ENCODE measurements at regions of chr1 and their contacts with region 1.

Region 1: DNA sequence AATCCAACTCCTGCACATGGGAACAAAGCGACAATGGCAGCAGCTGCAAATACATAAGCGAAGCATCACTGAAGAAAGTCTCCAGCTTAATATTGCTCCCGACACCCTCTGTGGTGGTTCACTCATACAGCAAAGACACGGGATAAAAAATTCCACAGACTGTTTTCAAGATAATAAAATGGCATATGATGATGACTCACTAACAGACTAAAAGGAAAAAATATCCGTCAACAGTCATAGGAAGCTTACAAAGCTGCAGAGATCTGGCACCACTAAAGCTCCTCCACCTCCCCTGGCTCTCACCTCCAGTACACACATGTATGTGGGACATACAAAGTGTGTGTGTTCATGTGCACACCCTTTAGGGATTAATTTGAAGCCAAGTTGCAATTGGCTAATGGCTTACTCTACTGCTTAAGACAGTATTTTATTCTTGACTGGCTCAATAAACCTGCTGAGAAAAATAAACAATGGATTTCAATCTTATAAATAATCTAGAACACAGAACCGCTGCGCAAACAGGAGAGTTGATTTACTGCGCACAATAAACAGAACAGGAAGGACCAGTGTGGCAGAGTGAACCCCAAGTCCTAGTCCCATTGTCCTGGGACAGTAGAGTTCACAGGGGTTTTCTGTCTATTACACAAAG is 94.4 kb downstream of the SLC45A1 start:
- DNase-seq: peak in 1 of 2 donors; percentile 74
- H3K4me3 ChIP-seq: peak overlapping the region; percentile 23 to 30
- H3K27ac ChIP-seq: peak overlapping the region; percentile 38 to 77
- H3K4me1 ChIP-seq: peaks cover 21 to 92% of the 10 kb centered on the region in 2 donors
- H3K27me3 ChIP-seq: no peaks in the 10 kb centered on the region
- CTCF ChIP-seq: no peak

Region 2: DNA sequence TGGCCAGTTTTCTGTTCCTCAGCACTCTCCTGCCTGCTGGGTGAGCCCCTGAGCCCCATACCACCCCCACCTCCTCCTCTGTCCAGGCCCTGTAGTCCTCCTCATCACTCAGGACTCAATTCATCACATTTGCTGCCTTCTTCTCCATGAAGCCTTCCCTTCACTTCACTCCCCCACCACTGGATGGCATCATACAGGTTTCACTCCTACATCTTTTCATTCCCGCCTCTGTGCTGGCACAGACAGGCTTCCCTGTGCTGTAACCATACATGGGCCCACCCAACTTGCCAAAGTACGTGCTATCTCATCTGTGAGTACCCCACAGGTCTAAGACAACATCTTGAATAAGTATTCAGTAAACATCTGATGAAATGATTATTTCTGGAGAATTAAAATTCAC is 37.5 kb before region 1 on chr1:
- intact Hi-C with region 1: loop called (anchors 1 kb)
- DNase-seq: no peak
- H3K4me3 ChIP-seq: no peak overlapping the region
- H3K27ac ChIP-seq: peak overlapping the region; percentile 88 to 91
- H3K4me1 ChIP-seq: peaks cover 26 to 68% of the 10 kb centered on the region in 2 donors
- H3K27me3 ChIP-seq: no peaks in the 10 kb centered on the region
- CTCF ChIP-seq: peak in 2 of 3 experiments; percentile 11 to 23

Region 3: DNA sequence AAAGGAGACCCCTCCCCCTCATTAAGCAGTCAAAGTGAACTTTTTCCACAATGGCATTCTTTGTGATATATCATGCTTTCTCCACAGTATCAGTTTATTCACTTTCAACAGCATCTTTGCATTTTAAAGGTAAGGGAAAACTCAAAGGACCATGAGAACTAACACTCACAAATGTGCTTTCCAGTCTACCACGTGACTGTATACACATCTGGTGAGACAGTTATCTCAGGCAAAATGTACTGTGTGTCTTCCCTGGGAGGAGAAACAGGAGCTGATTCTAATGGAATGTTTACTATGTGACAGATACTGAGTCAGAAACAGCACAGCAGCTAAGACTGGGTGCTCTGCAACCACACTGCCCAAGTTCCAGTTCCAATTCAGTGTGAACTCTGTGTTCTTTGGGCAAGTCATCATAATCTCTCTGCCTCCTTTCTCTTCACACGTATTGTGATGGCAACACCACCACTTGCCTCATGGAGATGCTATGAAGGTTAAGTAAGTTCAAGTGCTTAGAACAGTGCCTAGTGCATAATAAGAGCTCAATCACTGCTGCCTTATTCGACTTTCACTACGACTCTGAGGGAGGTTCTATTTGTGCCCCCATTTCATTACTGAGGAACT is 15.4 kb before region 1 on chr1:
- intact Hi-C with region 1: loop called (anchors 2 kb)
- DNase-seq: peak in 1 of 2 donors; percentile 87
- H3K4me3 ChIP-seq: peak overlapping the region in 1 of 2 donors; percentile 39
- H3K27ac ChIP-seq: peak overlapping the region; percentile 28 to 57
- H3K4me1 ChIP-seq: peaks cover 12 to 66% of the 10 kb centered on the region in 2 donors
- H3K27me3 ChIP-seq: no peaks in the 10 kb centered on the region
- CTCF ChIP-seq: no peak

Measured in ascending aorta (tissue), 2 donors.